Gastrocnemius medialis (tissue), 4 donors: ENCODE measurements at regions of chr19 and their contacts with region 1.

Region 1: DNA sequence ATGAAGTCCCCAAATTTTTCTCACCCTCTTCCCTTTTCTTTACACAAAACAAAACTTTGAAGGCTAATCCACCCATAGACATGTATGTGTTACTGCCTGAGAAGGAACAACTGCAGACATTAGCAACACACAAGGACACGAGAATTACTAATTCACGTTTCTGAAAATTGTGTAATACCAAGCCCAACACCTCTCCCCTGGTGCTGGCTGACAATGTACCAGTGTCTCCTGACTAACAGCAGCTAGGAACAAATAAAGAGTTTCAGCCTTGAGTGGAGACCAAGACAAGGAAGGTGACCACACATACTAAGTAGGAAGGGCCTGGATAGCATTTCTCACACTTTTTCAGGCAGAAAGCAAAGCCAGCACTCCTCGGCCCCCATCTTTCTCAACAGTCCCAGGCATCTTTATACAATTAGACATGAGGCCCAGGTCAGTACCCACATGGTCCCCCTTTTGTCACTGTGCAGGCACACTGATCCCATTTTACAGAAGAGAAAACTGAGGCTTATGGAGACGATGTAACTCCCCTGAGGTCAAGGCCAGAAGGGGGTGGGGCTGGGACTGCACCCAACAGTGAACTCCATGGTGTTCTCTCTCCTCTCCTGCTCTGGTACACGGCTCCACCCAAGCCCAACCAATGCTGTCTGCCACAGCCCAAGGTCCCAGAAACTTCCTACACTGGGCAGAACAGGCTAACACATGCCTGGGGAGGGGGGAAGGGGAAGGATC is 8.7 kb downstream of the BRD4 start:
- DNase-seq: peak; percentile 68 to 69
- ATAC-seq: peak; percentile 89 to 91
- H3K4me3 ChIP-seq: peak overlapping the region in 2 of 4 donors; percentile 3 to 7
- H3K27ac ChIP-seq: peak overlapping the region; percentile 87 to 98 (median 92)
- H3K4me1 ChIP-seq: peaks cover 96 to 100% of the 10 kb centered on the region in 2 donors
- H3K27me3 ChIP-seq: no peaks in the 10 kb centered on the region
- CTCF ChIP-seq: no peak
- POLR2A ChIP-seq: peak; percentile 25 to 42

Region 2: DNA sequence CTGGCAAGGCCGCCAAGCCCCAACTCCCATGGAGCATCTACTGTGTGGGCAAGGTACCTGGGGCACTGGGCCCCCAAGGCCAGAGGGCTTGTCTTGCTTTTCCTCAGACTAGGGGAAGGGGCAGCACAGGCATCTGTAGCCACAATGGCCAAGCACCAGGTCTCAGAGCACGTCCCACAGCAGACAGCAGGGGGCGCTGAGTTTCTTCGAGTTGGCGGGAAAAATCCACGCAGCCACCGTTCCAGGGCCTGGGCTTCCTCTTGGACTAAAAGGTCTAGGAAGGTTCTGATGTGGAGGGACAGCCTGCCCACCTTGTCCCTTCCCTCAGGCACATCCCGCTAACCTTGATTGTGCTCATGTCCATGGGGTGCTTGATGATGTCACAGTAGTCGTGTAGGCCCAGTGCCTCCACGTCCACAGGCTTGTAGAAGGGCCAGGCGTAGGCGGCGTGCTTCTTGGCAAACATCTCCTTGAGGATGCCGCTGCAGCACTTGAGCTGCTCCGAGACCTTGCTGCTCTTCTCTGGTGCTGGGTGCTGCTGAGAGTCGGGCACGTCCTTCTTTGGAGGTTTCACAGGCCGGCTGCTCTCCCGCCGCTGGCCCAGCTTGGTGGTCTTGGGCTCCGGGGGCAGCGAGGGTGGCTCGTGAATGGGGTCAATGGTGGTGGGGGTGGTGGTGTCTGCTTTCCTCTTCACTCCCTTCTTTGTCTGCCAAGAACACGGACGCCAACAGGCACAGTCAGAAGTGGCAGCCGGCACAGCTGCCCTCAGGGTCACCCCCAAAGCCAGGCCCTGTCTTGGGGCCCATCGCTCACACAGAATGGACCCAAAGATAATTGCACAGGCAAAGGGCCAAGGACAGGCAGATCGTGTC is 59.4 kb before region 1 on chr19:
- in situ Hi-C with region 1: loop called in 1 of 4 experiments (anchors 10 kb)
- intact Hi-C with region 1: no loop called
- DNase-seq: peak in 1 of 2 donors; percentile 65
- ATAC-seq: peak; percentile 14 to 31
- H3K4me3 ChIP-seq: no peak overlapping the region
- H3K27ac ChIP-seq: peak overlapping the region; percentile 61 to 80 (median 68)
- H3K4me1 ChIP-seq: peaks cover 50 to 54% of the 10 kb centered on the region in 2 donors
- H3K27me3 ChIP-seq: no peaks in the 10 kb centered on the region
- CTCF ChIP-seq: peak; percentile 68 to 88 (median 78)
- POLR2A ChIP-seq: no peak

Region 3: GRCh38 chr19:15469513-15470297 is 146.0 kb after region 1 on chr19:
- in situ Hi-C with region 1: no loop called
- intact Hi-C with region 1: no loop called
- DNase-seq: no peak
- ATAC-seq: peak in 1 of 2 donors; percentile 33
- H3K4me3 ChIP-seq: peak overlapping the region in 3 of 4 donors; percentile 33 to 42 (median 40)
- H3K27ac ChIP-seq: no peak overlapping the region
- H3K4me1 ChIP-seq: no peaks in the 10 kb centered on the region
- H3K27me3 ChIP-seq: peaks cover 32 to 38% (median 36%) of the 10 kb centered on the region in 3 donors
- CTCF ChIP-seq: no peak
- POLR2A ChIP-seq: no peak